ENCODE measurements at regions of chr3 and their contacts with region 1.

Region 1: GRCh38 chr3:13452490-13453335 is 27.4 kb upstream of the HDAC11 start:
- DNase-seq: peak in 4 of 5 donors; percentile 12 to 64 (median 51)
- H3K4me3 ChIP-seq: peak overlapping the region; percentile 84
- H3K4me3 Mint-ChIP-seq: peak overlapping the region; percentile 88 to 98 (median 96)
- H3K27ac ChIP-seq: no peak overlapping the region
- H3K27ac Mint-ChIP-seq: peak overlapping the region in 7 of 8 donors; percentile 70 to 99 (median 92)
- H3K4me1 ChIP-seq: peaks cover 15% of the 10 kb centered on the region
- H3K4me1 Mint-ChIP-seq: peaks cover 17 to 21% (median 19%) of the 10 kb centered on the region in 3 donors
- H3K27me3 ChIP-seq: no peaks in the 10 kb centered on the region
- H3K27me3 Mint-ChIP-seq: no peaks in the 10 kb centered on the region

Region 2: DNA sequence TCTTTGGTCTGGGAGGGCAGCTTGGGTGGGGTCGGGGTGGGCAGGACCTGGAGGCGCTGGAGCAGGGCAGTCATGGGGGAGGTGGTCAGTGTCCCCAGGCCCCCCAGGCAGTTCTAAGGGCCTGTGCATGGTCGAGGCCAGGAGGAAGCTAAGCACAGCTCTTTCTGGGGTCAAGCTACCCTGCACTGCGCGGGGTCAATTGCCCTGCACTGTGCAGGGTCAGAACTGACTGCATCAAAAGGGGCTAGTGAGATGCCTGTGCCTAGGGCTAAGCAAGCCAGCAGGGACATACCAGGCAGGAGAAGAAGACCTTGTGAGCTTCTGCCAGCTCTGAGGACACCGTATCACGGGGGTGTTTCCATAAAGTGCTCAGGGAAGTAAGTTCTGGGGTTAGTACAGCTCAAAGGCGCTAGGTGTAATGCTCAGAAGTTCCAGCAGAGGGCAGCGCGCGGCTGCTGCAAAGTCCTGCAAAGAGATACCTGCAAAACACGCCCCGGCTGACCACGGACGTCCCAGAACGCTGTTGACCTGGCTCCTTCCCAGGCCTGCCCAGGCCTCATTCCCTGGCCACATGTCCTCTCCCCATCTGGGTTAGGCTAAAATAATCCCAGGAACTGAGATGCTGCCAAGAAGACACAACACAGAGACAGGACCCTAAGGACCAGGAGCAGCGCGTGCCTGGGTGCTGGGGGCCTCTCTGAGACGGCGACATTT is 360.7 kb before region 1 on chr3:
- CTCF ChIA-PET with region 1: interaction called, 36 read pairs
- POLR2A ChIA-PET with region 1: no interaction called
- DNase-seq: peak; percentile 66 to 84 (median 70)
- H3K4me3 ChIP-seq: no peak overlapping the region
- H3K4me3 Mint-ChIP-seq: no peak overlapping the region
- H3K27ac ChIP-seq: no peak overlapping the region
- H3K27ac Mint-ChIP-seq: peak overlapping the region in 1 of 8 donors; percentile 38
- H3K4me1 ChIP-seq: no peaks in the 10 kb centered on the region
- H3K4me1 Mint-ChIP-seq: peaks cover 5 to 7% (median 7%) of the 10 kb centered on the region in 3 donors
- H3K27me3 ChIP-seq: no peaks in the 10 kb centered on the region
- H3K27me3 Mint-ChIP-seq: peaks cover 4% of the 10 kb centered on the region in 2 donors

Region 3: DNA sequence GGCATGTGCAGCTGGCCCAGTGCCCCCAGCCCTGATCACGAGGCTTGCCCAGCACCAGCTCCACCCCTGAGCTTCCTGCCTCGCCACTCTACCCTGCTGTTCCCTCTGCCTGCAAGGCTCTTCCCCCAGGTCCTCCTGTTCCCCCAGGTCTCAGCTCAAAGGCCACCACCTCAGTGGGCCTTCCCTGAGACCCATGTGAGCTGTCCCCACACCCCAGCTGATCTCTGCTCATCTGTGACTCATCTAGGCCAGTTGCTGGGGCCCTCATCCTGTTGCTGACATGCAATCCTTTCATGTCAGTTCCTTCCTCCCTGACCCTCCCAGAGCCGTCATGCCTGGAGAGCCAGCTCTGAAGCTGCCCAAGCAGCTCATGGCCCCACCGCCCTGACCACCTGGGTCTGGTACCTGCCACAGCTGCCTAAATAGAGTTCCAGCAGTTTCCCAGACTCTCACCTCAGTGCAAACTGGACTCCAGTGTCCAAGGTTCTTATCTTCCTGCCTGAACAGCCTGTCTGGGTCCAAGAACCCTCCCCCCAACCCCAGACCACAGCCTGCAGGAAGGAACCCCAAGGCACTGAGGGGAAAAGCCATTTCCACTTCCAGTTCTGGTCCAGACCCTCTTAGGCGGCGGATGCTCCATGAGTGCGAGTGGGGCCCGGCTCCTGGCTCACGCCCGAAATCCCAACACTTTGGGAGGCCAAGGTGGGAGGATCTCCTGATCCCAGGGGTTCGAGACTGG is 262.9 kb before region 1 on chr3:
- CTCF ChIA-PET with region 1: no interaction called
- POLR2A ChIA-PET with region 1: no interaction called
- DNase-seq: no peak
- H3K4me3 ChIP-seq: no peak overlapping the region
- H3K4me3 Mint-ChIP-seq: peak overlapping the region in 6 of 7 donors; percentile 38 to 90 (median 69)
- H3K27ac ChIP-seq: no peak overlapping the region
- H3K27ac Mint-ChIP-seq: peak overlapping the region in 7 of 8 donors; percentile 22 to 98 (median 92)
- H3K4me1 ChIP-seq: no peaks in the 10 kb centered on the region
- H3K4me1 Mint-ChIP-seq: peaks cover 11 to 28% (median 25%) of the 10 kb centered on the region in 3 donors
- H3K27me3 ChIP-seq: no peaks in the 10 kb centered on the region
- H3K27me3 Mint-ChIP-seq: peaks cover 9 to 57% of the 10 kb centered on the region in 2 donors

Region 4: DNA sequence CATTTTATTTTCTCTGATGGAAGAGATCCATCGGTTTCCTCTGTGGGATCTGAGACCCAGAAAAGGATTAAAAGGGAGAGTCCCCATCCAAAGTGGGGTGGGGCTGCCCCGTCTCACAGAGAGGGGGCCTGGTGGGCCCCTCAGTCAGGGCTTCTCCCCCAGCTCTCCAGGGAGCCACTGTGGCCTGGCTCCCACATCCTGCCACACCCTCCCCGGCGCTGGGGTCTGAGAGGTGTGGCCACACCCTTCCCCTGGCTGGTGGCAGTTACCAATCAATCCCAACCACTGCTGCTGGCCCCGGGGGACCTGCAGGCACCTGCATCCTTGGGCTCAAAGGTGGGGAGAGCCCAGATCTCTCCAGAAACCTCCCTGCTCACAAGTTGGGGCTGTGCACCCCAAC is 217.6 kb before region 1 on chr3:
- CTCF ChIA-PET with region 1: no interaction called
- POLR2A ChIA-PET with region 1: no interaction called
- DNase-seq: peak in 1 of 5 donors; percentile 13
- H3K4me3 ChIP-seq: no peak overlapping the region
- H3K4me3 Mint-ChIP-seq: peak overlapping the region in 6 of 7 donors; percentile 30 to 85 (median 56)
- H3K27ac ChIP-seq: no peak overlapping the region
- H3K27ac Mint-ChIP-seq: peak overlapping the region in 6 of 8 donors; percentile 39 to 84 (median 72)
- H3K4me1 ChIP-seq: peaks cover 28% of the 10 kb centered on the region
- H3K4me1 Mint-ChIP-seq: peaks cover 29 to 35% (median 32%) of the 10 kb centered on the region in 3 donors
- H3K27me3 ChIP-seq: no peaks in the 10 kb centered on the region
- H3K27me3 Mint-ChIP-seq: peaks cover 4 to 23% of the 10 kb centered on the region in 2 donors

Region 5: DNA sequence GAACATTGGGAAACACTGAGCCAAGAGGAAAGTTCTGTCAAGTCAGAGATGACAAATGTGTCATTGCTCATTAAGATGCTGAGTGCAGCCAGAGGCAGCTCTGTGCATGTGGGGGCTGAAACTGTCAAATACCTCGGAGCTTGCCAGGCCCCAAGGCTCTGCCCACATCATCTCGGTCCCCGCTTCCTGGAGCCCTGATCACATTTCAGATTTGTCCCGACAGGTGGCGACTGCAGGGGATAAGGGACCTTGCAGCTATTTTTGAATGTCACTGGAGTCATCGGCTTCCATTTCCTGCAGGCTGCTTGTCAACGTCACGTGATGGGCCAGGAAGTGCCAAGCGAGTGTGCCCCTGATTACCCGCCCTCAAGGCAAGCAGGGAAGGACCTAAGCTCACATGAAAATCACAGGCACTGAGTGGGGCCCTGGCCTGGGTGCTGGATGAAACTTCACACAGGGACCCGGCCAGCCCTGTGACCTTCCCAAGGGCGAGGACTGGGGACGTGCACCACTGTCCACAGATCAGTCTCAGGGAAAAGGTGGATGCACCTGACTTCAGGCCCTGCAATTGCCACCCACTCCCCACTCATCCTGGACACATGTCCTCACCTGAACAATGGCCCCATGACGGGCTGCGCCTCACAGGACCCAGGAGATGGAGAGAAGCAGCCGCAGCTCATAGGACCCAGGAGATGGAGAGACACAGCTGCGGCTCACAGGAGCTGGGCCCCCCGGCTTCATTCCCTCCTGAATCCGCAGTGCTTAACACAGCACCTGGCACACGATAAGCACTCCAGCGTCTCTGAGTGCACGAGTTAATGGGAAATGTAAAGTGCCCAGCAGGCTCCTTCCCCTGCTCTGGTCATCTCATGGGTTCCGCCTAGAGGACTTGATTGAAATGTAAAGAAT is 106.0 kb before region 1 on chr3:
- CTCF ChIA-PET with region 1: interaction called, 125 read pairs
- POLR2A ChIA-PET with region 1: interaction called, 3 read pairs
- DNase-seq: peak; percentile 49 to 83 (median 74)
- H3K4me3 ChIP-seq: peak overlapping the region; percentile 11
- H3K4me3 Mint-ChIP-seq: peak overlapping the region in 4 of 7 donors; percentile 25 to 53 (median 40)
- H3K27ac ChIP-seq: no peak overlapping the region
- H3K27ac Mint-ChIP-seq: peak overlapping the region; percentile 13 to 86 (median 76)
- H3K4me1 ChIP-seq: peaks cover 50% of the 10 kb centered on the region
- H3K4me1 Mint-ChIP-seq: peaks cover 54 to 59% (median 55%) of the 10 kb centered on the region in 3 donors
- H3K27me3 ChIP-seq: no peaks in the 10 kb centered on the region
- H3K27me3 Mint-ChIP-seq: no peaks in the 10 kb centered on the region

Region 6: DNA sequence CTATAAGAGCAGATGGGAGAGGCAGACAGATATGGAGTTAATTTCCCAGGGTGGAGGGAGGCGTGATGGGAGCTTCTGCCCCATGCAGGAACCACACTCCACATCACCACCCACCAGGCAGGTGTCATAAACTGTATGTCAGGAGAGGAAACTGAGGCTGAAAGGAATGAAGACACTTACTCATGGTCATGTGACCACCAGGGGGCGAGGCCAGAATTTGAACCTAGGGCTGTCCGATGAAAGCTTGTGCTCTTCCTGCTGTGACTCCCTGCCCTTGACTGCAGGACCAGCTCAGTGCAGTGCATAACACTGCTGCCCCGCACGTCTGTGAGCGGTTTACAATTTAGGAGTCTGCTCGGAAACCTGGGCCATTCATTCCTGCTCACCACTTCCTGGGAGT is 61.4 kb before region 1 on chr3:
- CTCF ChIA-PET with region 1: interaction called, 71 read pairs
- POLR2A ChIA-PET with region 1: no interaction called
- DNase-seq: peak in 1 of 5 donors; percentile 7
- H3K4me3 ChIP-seq: no peak overlapping the region
- H3K4me3 Mint-ChIP-seq: no peak overlapping the region
- H3K27ac ChIP-seq: no peak overlapping the region
- H3K27ac Mint-ChIP-seq: peak overlapping the region in 2 of 8 donors; percentile 72 to 79
- H3K4me1 ChIP-seq: no peaks in the 10 kb centered on the region
- H3K4me1 Mint-ChIP-seq: peaks cover 10 to 18% (median 14%) of the 10 kb centered on the region in 3 donors
- H3K27me3 ChIP-seq: no peaks in the 10 kb centered on the region
- H3K27me3 Mint-ChIP-seq: peaks cover 0 to 3% of the 10 kb centered on the region in 2 donors

Region 7: DNA sequence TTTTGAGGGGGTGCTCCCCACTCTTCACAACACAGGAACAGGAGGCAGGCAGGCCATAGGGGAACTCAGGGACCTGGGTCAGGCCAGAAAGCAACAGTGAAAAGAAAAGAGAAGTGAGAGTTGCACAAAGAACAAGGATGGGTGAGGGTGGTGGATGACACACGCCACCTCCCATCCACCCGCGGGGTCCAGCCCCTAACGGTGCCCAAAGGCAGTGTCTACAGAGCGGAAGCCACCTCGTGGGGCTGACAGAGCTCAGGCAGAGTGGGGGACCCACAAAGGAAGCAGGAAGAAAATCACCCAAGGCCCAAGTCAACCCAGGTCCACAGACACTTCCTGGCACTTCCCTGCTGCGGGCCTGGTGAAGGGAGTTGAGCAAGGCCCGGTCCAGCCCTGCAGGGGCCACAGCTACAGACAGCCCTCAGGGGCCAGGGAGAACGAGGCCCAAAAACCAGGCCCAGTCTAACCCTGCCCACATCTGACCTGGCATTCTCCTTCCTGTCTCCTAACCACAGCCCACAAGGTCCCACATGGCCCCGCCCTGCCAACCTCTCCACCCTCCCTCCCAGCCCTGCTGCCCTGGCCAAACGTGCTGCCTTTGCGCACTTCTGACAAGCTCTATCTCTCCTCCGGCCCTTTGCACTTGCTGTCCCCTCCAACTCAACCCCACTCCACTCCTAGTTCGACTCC is 38.5 kb before region 1 on chr3:
- CTCF ChIA-PET with region 1: interaction called, 106 read pairs
- POLR2A ChIA-PET with region 1: interaction called, 16 read pairs
- DNase-seq: peak; percentile 62 to 86 (median 76)
- H3K4me3 ChIP-seq: peak overlapping the region; percentile 55
- H3K4me3 Mint-ChIP-seq: peak overlapping the region; percentile 76 to 94 (median 85)
- H3K27ac ChIP-seq: peak overlapping the region; percentile 60
- H3K27ac Mint-ChIP-seq: peak overlapping the region; percentile 85 to 99 (median 97)
- H3K4me1 ChIP-seq: peaks cover 67% of the 10 kb centered on the region
- H3K4me1 Mint-ChIP-seq: peaks cover 56 to 71% (median 70%) of the 10 kb centered on the region in 3 donors
- H3K27me3 ChIP-seq: no peaks in the 10 kb centered on the region
- H3K27me3 Mint-ChIP-seq: peaks cover 0 to 4% of the 10 kb centered on the region in 2 donors

Region 8: GRCh38 chr3:13427662-13428603 is 24.8 kb before region 1 on chr3:
- CTCF ChIA-PET with region 1: interaction called, 21 read pairs
- POLR2A ChIA-PET with region 1: interaction called, 4 read pairs
- DNase-seq: peak in 2 of 5 donors; percentile 37 to 60
- H3K4me3 ChIP-seq: no peak overlapping the region
- H3K4me3 Mint-ChIP-seq: peak overlapping the region; percentile 25 to 71 (median 49)
- H3K27ac ChIP-seq: no peak overlapping the region
- H3K27ac Mint-ChIP-seq: peak overlapping the region; percentile 43 to 94 (median 86)
- H3K4me1 ChIP-seq: peaks cover 36% of the 10 kb centered on the region
- H3K4me1 Mint-ChIP-seq: peaks cover 14 to 35% (median 26%) of the 10 kb centered on the region in 3 donors
- H3K27me3 ChIP-seq: no peaks in the 10 kb centered on the region
- H3K27me3 Mint-ChIP-seq: no peaks in the 10 kb centered on the region

Region 9: GRCh38 chr3:13581485-13582380 is 129.0 kb after region 1 on chr3:
- CTCF ChIA-PET with region 1: no interaction called
- POLR2A ChIA-PET with region 1: no interaction called
- DNase-seq: peak in 1 of 5 donors; percentile 9
- H3K4me3 ChIP-seq: no peak overlapping the region
- H3K4me3 Mint-ChIP-seq: no peak overlapping the region
- H3K27ac ChIP-seq: no peak overlapping the region
- H3K27ac Mint-ChIP-seq: no peak overlapping the region
- H3K4me1 ChIP-seq: no peaks in the 10 kb centered on the region
- H3K4me1 Mint-ChIP-seq: no peaks in the 10 kb centered on the region
- H3K27me3 ChIP-seq: no peaks in the 10 kb centered on the region
- H3K27me3 Mint-ChIP-seq: peaks cover 5 to 10% of the 10 kb centered on the region in 2 donors